Caco-2 (cell line): ENCODE measurements at regions of chr7 and their contacts with region 1.

Region 1: GRCh38 chr7:4383584-4383983 is 298.5 kb upstream of the FOXK1 start:
- DNase-seq: no peak
- H3K4me3 ChIP-seq: no peak overlapping the region
- H3K4me3 Mint-ChIP-seq: no peak overlapping the region
- H3K27ac Mint-ChIP-seq: no peak overlapping the region
- H3K4me1 ChIP-seq: no peaks in the 10 kb centered on the region
- H3K4me1 Mint-ChIP-seq: no peaks in the 10 kb centered on the region
- H3K27me3 ChIP-seq: no peaks in the 10 kb centered on the region
- H3K27me3 Mint-ChIP-seq: peaks cover 3% of the 10 kb centered on the region
- CTCF ChIP-seq: no peak

Region 2: GRCh38 chr7:4406288-4407058 is 22.9 kb after region 1 on chr7:
- CTCF ChIA-PET with region 1: no interaction called
- POLR2A ChIA-PET with region 1: no interaction called
- intact Hi-C with region 1: loop called (anchors 2 kb)
- DNase-seq: peak in 1 of 2 experiments; percentile 15
- H3K4me3 ChIP-seq: no peak overlapping the region
- H3K4me3 Mint-ChIP-seq: no peak overlapping the region
- H3K27ac Mint-ChIP-seq: no peak overlapping the region
- H3K4me1 ChIP-seq: no peaks in the 10 kb centered on the region
- H3K4me1 Mint-ChIP-seq: no peaks in the 10 kb centered on the region
- H3K27me3 ChIP-seq: no peaks in the 10 kb centered on the region
- H3K27me3 Mint-ChIP-seq: no peaks in the 10 kb centered on the region
- CTCF ChIP-seq: peak in 1 of 2 experiments; percentile 3

Region 3: GRCh38 chr7:4744391-4745264 is 361.0 kb after region 1 on chr7:
- CTCF ChIA-PET with region 1: no interaction called
- POLR2A ChIA-PET with region 1: no interaction called
- intact Hi-C with region 1: no loop called
- DNase-seq: peak; percentile 87 to 88
- H3K4me3 ChIP-seq: no peak overlapping the region
- H3K4me3 Mint-ChIP-seq: peak overlapping the region; percentile 38
- H3K27ac Mint-ChIP-seq: peak overlapping the region; percentile 84
- H3K4me1 ChIP-seq: peaks cover 23% of the 10 kb centered on the region
- H3K4me1 Mint-ChIP-seq: peaks cover 12% of the 10 kb centered on the region
- H3K27me3 ChIP-seq: no peaks in the 10 kb centered on the region
- H3K27me3 Mint-ChIP-seq: no peaks in the 10 kb centered on the region
- CTCF ChIP-seq: no peak